ENCODE measurements at regions of chr11 and their contacts with region 1.

Region 1: DNA sequence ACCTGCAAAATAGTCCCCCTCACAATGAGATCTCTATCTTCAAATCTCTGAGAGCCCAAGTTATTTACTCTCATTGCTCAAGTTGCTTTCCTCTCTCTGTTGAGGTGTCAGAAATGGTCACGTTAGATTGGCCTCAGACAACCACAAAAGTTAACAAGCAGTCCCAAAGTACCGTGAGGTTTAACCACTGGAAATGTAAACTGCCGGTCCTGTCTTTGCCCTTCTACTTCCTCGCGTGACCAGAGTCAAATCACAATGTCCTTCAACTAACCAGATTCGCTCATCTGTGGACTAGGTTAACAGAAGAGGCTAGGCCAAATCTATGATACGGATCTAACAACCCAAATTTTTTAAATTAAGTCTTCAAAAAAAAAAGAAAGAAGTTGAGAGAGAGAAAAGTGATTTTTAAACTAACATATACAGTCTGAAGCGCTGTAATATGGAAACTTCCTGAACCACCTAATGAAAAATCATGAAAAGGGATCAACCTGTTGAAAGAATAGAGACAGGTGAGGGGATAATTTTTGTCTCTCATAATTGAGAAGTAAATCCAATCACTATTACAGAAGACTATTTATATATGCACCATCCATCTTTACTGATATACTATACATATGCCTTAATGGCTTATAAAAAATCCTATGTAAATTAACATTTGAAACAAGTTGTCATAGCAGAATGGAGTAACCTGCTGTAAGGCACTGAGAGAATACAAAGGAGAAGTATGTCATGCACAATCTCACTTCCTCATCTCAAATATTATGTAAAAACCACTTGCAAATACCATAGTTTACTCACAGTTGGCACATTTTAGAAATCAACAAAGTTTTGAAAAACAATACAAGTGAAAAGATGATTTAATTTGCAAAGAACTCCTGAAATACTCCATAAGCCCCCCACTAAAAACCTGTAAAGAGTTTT is 3.3 kb upstream of the JAML start:
- DNase-seq: peak in 4 of 5 donors; percentile 51 to 67 (median 62)
- H3K4me3 ChIP-seq: peak overlapping the region in 1 of 2 donors; percentile 5
- H3K4me3 Mint-ChIP-seq: peak overlapping the region in 7 of 8 donors; percentile 22 to 79 (median 78)
- H3K27ac ChIP-seq: peak overlapping the region; percentile 58
- H3K27ac Mint-ChIP-seq: peak overlapping the region in 2 of 7 donors; percentile 94 to 95
- H3K4me1 ChIP-seq: peaks cover 84% of the 10 kb centered on the region
- H3K4me1 Mint-ChIP-seq: peaks cover 25 to 54% (median 39%) of the 10 kb centered on the region in 4 donors
- H3K27me3 ChIP-seq: no peaks in the 10 kb centered on the region
- H3K27me3 Mint-ChIP-seq: no peaks in the 10 kb centered on the region

Region 2: DNA sequence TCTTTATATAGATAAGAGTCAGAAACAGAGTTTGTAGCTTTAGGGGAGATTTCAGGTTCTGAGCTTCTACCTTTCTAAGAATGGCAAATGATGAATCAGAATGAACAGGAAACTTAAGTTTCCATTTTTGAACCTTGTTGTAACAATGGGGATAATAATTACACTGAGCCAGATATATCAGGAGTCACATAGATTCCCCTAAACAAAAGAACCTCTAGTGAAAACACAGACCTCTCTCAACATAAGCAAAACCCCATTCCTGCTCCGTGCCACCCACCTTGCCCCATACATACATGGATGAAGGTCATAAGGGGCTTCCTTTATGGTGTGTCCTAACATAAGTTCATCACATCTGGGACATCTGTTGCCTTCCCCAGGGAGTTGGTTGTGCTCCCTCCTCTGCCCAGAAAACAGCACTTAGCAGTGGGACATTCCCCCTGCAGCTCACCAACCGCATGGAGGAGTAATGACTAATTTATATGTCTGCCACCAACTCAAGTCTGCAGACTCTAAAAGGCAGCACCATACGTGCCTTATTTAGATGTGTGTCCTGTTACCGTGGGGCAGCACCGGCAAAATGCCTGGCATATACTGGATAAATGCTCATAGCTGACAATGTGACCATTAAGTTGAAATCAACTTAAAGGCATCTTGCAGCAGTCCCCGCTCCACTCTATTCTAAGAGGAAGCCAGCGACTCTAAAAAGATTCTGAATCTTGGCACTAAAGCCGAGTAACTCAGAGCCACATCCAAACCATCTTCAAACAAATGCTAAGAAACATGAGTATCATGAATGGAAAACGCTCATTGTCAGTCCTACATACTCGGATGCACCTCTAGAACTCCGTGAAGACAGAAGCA is 11.3 kb before region 1 on chr11:
- CTCF ChIA-PET with region 1: interaction called, 18 read pairs
- POLR2A ChIA-PET with region 1: interaction called, 71 read pairs
- intact Hi-C with region 1: loop called (anchors 1 kb)
- DNase-seq: peak in 1 of 5 donors; percentile 73
- H3K4me3 ChIP-seq: peak overlapping the region; percentile 2 to 35
- H3K4me3 Mint-ChIP-seq: peak overlapping the region; percentile 73 to 91 (median 87)
- H3K27ac ChIP-seq: peak overlapping the region; percentile 50
- H3K27ac Mint-ChIP-seq: peak overlapping the region; percentile 90 to 96 (median 93)
- H3K4me1 ChIP-seq: peaks cover 90% of the 10 kb centered on the region
- H3K4me1 Mint-ChIP-seq: peaks cover 62 to 100% (median 84%) of the 10 kb centered on the region in 4 donors
- H3K27me3 ChIP-seq: no peaks in the 10 kb centered on the region
- H3K27me3 Mint-ChIP-seq: no peaks in the 10 kb centered on the region

Region 3: DNA sequence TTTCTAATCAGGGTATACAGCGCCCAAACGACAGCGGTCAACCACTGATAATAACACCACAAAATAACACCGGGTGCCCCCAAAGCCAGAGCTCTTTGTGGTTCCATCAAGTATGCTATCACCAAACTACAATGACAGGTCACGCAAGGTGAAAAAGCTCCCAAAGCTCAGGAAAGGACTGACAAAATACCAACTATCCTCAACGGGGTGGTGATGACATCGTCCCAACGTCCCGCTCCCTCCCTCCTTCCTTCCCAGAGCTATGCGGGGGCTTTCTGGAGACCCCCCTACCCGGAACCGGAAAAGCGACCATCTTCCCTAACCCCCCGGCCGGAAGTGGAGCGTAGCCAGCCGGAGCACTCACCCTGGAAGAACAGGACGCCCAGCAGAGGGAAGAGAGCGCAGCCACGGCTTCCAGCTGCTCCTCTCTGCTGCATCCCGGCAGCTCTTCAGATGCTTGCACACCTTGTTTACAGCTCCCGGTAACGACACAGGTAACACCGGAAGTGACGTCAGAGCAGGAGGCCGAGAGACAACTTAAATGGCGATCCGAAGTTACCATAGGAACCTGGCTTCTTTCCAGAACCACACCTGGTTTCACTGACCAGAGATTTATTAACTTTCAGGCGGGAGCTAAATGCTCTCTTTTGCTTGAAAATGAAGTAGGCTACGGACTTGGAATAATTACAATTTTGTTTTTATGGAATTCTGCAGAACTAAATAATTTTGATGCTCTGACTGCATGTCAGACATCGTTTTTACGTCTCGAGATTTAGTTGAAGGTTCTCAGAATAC is 23.9 kb after region 1 on chr11 and contains the start of gene MPZL3:
- CTCF ChIA-PET with region 1: interaction called, 9 read pairs
- POLR2A ChIA-PET with region 1: interaction called, 142 read pairs
- intact Hi-C with region 1: loop called (anchors 1 kb)
- DNase-seq: peak; percentile 87 to 96 (median 91)
- H3K4me3 ChIP-seq: peak within 1 kb of the TSS; percentile 57 to 94
- H3K4me3 Mint-ChIP-seq: peak within 1 kb of the TSS; percentile 95 to 99 (median 98)
- H3K27ac ChIP-seq: peak within 1 kb of the TSS; percentile 94
- H3K27ac Mint-ChIP-seq: peak within 1 kb of the TSS; percentile 99 to 100 (median 99)
- H3K4me1 ChIP-seq: peaks cover 43% of the 10 kb centered on the region
- H3K4me1 Mint-ChIP-seq: peaks cover 26 to 53% (median 39%) of the 10 kb centered on the region in 4 donors
- H3K27me3 ChIP-seq: no peaks in the 10 kb centered on the region
- H3K27me3 Mint-ChIP-seq: peaks cover 0 to 2% of the 10 kb centered on the region in 2 donors
- total RNA-seq, gene MPZL3: 29.9 to 32.0 TPM

Region 4: DNA sequence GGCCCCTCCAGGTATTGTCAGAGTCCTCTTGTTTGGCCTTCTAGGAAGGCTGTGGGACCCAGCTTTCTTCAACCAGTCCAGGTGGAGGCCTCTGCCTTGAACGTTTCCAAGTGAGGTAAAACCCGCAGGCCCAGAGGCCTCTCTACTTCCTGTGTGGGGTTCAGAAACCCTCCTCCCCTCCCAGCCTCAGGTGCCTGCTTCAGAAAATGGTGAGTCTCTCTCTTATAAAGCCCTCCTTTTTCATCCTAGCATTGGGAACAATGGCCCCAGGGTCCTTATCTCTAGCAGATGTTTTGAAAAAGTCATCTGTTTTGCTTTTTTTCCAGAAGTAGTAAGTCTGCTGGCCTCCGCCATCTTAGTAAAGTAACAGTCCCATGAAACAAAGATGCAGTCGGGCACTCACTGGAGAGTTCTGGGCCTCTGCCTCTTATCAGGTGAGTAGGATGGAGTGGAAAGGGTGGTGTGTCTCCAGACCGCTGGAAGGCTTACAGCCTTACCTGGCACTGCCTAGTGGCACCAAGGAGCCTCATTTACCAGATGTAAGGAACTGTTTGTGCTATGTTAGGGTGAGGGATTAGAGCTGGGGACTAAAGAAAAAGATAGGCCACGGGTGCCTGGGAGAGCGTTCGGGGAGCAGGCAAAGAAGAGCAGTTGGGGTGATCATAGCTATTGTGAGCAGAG is 76.6 kb after region 1 on chr11 and contains the start of gene CD3E:
- CTCF ChIA-PET with region 1: no interaction called
- POLR2A ChIA-PET with region 1: interaction called, 12 read pairs
- intact Hi-C with region 1: no loop called
- DNase-seq: peak; percentile 76 to 83 (median 79)
- H3K4me3 ChIP-seq: peak within 1 kb of the TSS; percentile 96 to 97
- H3K4me3 Mint-ChIP-seq: peak within 1 kb of the TSS; percentile 99 to 100 (median 100)
- H3K27ac ChIP-seq: peak within 1 kb of the TSS; percentile 91
- H3K27ac Mint-ChIP-seq: peak within 1 kb of the TSS; percentile 98 to 100 (median 99)
- H3K4me1 ChIP-seq: peaks cover 68% of the 10 kb centered on the region
- H3K4me1 Mint-ChIP-seq: peaks cover 46 to 94% (median 66%) of the 10 kb centered on the region in 4 donors
- H3K27me3 ChIP-seq: no peaks in the 10 kb centered on the region
- H3K27me3 Mint-ChIP-seq: no peaks in the 10 kb centered on the region
- total RNA-seq, gene CD3E: 581 to 618 TPM

Region 5: DNA sequence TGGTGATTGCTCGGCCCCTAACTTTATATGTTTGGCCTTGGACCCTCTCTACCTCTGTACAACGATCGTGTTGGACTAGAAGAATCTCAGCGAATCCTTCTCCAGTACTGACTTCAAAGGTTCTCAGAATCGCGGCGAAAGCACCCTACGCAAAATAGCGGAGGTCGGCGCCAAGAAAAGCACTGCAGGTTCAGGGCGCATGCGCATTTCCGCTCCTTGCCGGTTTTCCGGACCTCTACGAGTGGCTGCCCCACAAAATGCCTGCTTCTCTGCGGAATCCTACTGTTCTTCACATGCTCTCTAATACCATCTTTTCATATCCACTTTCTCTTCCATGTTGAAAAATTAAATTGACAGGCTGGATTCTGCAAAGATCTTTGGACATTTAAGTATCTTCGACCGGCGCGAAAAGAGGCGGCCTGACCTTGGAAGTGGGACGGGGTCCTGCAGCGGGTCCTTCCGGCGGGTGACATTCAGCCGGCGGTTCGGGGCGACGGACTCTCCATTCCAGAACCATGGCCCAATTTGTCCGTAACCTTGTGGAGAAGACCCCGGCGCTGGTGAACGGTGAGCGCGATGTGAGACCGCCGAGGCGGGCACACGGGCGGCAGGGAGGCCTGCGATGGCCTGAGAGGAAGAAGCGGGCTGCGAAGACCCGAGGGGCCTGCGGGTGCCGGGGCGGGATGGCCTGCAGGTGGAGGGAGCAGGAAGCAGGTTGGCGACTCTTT is 173.2 kb after region 1 on chr11 and contains the start of gene ATP5MG:
- CTCF ChIA-PET with region 1: no interaction called
- POLR2A ChIA-PET with region 1: no interaction called
- intact Hi-C with region 1: loop called (anchors 1 kb)
- DNase-seq: peak; percentile 92 to 94 (median 94)
- H3K4me3 ChIP-seq: peak within 1 kb of the TSS; percentile 87 to 93
- H3K4me3 Mint-ChIP-seq: peak within 1 kb of the TSS; percentile 91 to 99 (median 96)
- H3K27ac ChIP-seq: peak within 1 kb of the TSS; percentile 82
- H3K27ac Mint-ChIP-seq: peak within 1 kb of the TSS; percentile 99 to 100 (median 99)
- H3K4me1 ChIP-seq: peaks cover 72% of the 10 kb centered on the region
- H3K4me1 Mint-ChIP-seq: peaks cover 39 to 87% (median 65%) of the 10 kb centered on the region in 4 donors
- H3K27me3 ChIP-seq: no peaks in the 10 kb centered on the region
- H3K27me3 Mint-ChIP-seq: no peaks in the 10 kb centered on the region
- total RNA-seq, gene ATP5MG: 158 to 161 TPM